B cell (primary cell): ENCODE measurements at regions of chr18 and their contacts with region 1.

Region 1: DNA sequence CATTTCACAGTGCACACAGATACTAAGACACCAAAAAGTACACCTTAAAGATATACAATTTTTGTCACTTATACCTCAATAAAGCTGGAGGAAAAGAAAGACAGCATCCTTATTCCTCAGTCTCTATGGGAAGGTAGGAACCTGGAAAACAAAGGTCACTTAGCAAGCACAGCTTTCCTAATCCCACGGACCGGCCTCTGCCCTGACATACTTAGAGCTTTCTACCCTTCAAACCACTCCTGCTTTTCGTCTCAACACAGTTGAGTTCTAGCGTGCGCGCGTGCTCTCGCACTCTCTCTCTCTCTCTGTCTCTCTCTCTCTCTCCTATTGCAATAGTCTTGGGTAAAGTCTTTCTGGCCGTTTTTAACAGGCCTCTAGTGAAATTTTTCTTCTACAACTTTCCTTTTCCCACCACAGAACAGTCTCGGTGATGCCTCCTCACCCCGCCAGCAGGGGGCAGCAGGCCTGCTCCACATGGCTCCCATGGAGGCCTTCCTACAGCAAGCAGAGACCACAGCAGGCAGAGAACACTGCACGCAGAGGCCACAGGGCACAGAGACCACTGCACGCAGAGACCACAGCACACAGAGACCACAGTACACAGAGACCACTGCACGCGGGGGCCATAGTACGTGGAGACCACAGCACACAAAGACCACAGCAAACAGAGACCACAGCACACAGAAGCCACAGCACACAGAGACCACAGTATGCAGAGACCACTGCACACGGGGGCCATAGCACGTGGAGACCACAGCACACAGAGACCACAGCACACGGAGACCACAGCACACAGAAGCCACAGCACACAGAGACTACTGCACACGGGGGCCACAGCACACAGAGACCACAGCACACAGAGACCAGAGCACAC is 106.9 kb downstream of the FBXO15 start:
- DNase-seq: peak; percentile 62
- ATAC-seq: peak; percentile 79
- H3K4me3 ChIP-seq: no peak overlapping the region
- H3K4me3 Mint-ChIP-seq: no peak overlapping the region
- H3K27ac ChIP-seq: no peak overlapping the region
- H3K27ac Mint-ChIP-seq: no peak overlapping the region
- H3K4me1 ChIP-seq: peaks cover 18% of the 10 kb centered on the region in 2 donors
- H3K4me1 Mint-ChIP-seq: peaks cover 20% of the 10 kb centered on the region
- H3K27me3 ChIP-seq: no peaks in the 10 kb centered on the region
- H3K27me3 Mint-ChIP-seq: no peaks in the 10 kb centered on the region
- CTCF ChIP-seq: peak; percentile 66

Region 2: GRCh38 chr18:74063023-74063422 is 22.3 kb after region 1 on chr18:
- CTCF ChIA-PET with region 1: interaction called, 7 read pairs
- POLR2A ChIA-PET with region 1: interaction called, 3 read pairs
- intact Hi-C with region 1: loop called (anchors 1 kb)
- DNase-seq: peak; percentile 65
- ATAC-seq: peak; percentile 53
- H3K4me3 ChIP-seq: peak overlapping the region in 1 of 5 experiments; percentile 6
- H3K4me3 Mint-ChIP-seq: peak overlapping the region; percentile 29
- H3K27ac ChIP-seq: peak overlapping the region; percentile 72 to 77
- H3K27ac Mint-ChIP-seq: peak overlapping the region; percentile 94
- H3K4me1 ChIP-seq: peaks cover 53 to 59% of the 10 kb centered on the region in 2 donors
- H3K4me1 Mint-ChIP-seq: peaks cover 62% of the 10 kb centered on the region
- H3K27me3 ChIP-seq: no peaks in the 10 kb centered on the region
- H3K27me3 Mint-ChIP-seq: no peaks in the 10 kb centered on the region
- CTCF ChIP-seq: no peak